CD4-positive, alpha-beta memory T cell (primary cell): ENCODE measurements at regions of chrX and their contacts with region 1.

Region 1: DNA sequence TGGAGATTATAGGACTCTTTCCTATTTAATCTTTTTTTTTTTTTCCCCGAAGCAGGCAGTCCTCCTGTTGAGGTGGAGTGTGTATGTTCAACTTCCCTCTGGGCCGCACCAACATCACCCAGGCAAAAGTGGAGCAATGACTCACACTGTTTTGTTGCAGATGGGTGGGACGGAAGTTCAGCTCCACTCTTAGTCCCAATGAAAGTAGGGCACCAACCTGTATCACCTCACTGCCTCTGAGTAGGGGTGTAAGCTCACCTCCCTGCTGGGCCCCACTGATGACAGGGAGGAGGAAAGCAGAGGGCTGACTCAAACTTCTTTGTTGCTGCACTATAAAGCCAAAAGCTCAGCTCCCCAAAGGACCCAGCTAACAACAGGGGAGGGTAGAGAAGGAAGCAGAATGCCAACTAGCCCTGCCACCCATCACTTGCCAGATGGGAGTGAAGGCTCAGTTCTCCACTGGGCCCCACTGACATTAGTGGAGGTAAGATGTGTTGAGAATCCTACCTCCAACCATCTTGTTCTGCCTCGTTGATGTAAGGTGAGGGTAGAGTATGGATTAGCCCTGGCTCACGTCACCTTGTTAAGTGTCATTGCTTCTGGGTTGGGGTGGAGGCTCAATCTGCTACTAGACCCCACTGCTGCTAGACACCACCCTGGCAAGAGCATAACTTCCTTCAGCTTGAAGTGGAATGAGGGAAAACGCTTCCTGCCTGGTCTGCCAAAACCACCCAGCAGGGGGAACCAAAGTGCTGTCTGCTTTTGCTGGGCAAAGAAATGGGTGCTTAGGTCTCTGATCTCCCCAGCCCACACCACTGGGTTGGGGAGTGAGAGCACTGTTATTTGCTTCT is 14.1 kb downstream of the RPS6KA3 start:
- DNase-seq: peak; percentile 72 to 82 (median 75)
- H3K4me3 ChIP-seq: no peak overlapping the region
- H3K4me3 Mint-ChIP-seq: peak overlapping the region in 7 of 8 donors; percentile 32 to 66 (median 48)
- H3K27ac ChIP-seq: peak overlapping the region; percentile 48
- H3K27ac Mint-ChIP-seq: peak overlapping the region; percentile 88 to 94 (median 92)
- H3K4me1 ChIP-seq: peaks cover 70% of the 10 kb centered on the region
- H3K4me1 Mint-ChIP-seq: peaks cover 36 to 67% (median 50%) of the 10 kb centered on the region in 4 donors
- H3K27me3 ChIP-seq: no peaks in the 10 kb centered on the region
- H3K27me3 Mint-ChIP-seq: no peaks in the 10 kb centered on the region

Region 2: DNA sequence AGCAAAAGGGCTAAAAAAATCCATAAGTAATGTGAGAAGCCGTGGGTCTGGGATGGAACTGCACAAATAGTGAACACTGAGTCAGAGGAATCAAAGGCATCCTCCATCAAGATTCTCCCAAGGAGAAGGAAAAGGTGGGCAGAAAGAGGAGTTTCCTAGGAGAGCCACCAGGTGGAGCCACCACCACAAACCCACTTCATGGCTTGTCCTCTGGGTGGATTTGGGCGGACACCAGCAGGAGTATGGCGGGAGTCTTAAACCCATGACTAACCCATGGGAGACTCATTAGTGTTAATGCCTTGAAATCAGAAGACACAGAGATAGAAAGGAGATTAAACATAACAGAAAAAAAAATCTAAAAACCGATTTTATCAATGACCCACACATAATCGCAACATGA is 512.9 kb before region 1 on chrX:
- CTCF ChIA-PET with region 1: no interaction called
- POLR2A ChIA-PET with region 1: no interaction called
- intact Hi-C with region 1: no loop called
- DNase-seq: peak; percentile 39 to 47 (median 42)
- H3K4me3 ChIP-seq: no peak overlapping the region
- H3K4me3 Mint-ChIP-seq: peak overlapping the region in 4 of 8 donors; percentile 39 to 85 (median 62)
- H3K27ac ChIP-seq: peak overlapping the region; percentile 21
- H3K27ac Mint-ChIP-seq: peak overlapping the region; percentile 71 to 98 (median 86)
- H3K4me1 ChIP-seq: peaks cover 90% of the 10 kb centered on the region
- H3K4me1 Mint-ChIP-seq: peaks cover 47 to 84% (median 68%) of the 10 kb centered on the region in 4 donors
- H3K27me3 ChIP-seq: no peaks in the 10 kb centered on the region
- H3K27me3 Mint-ChIP-seq: no peaks in the 10 kb centered on the region

Region 3: GRCh38 chrX:20159797-20160385 is 92.7 kb before region 1 on chrX:
- CTCF ChIA-PET with region 1: no interaction called
- POLR2A ChIA-PET with region 1: no interaction called
- intact Hi-C with region 1: no loop called
- DNase-seq: no peak
- H3K4me3 ChIP-seq: no peak overlapping the region
- H3K4me3 Mint-ChIP-seq: no peak overlapping the region
- H3K27ac ChIP-seq: no peak overlapping the region
- H3K27ac Mint-ChIP-seq: peak overlapping the region in 1 of 7 donors; percentile 48
- H3K4me1 ChIP-seq: no peaks in the 10 kb centered on the region
- H3K4me1 Mint-ChIP-seq: peaks cover 0 to 2% (median under 1%) of the 10 kb centered on the region in 4 donors
- H3K27me3 ChIP-seq: no peaks in the 10 kb centered on the region
- H3K27me3 Mint-ChIP-seq: no peaks in the 10 kb centered on the region

Region 4: GRCh38 chrX:20217275-20217674 is 35.3 kb before region 1 on chrX:
- CTCF ChIA-PET with region 1: interaction called, 3 read pairs
- POLR2A ChIA-PET with region 1: no interaction called
- intact Hi-C with region 1: loop called (anchors 5 kb)
- DNase-seq: peak in 2 of 5 donors; percentile 12 to 19
- H3K4me3 ChIP-seq: no peak overlapping the region
- H3K4me3 Mint-ChIP-seq: peak overlapping the region in 5 of 8 donors; percentile 1 to 48 (median 16)
- H3K27ac ChIP-seq: no peak overlapping the region
- H3K27ac Mint-ChIP-seq: peak overlapping the region in 1 of 7 donors; percentile 47
- H3K4me1 ChIP-seq: peaks cover 76% of the 10 kb centered on the region
- H3K4me1 Mint-ChIP-seq: peaks cover 33 to 71% (median 46%) of the 10 kb centered on the region in 4 donors
- H3K27me3 ChIP-seq: no peaks in the 10 kb centered on the region
- H3K27me3 Mint-ChIP-seq: no peaks in the 10 kb centered on the region

Region 5: DNA sequence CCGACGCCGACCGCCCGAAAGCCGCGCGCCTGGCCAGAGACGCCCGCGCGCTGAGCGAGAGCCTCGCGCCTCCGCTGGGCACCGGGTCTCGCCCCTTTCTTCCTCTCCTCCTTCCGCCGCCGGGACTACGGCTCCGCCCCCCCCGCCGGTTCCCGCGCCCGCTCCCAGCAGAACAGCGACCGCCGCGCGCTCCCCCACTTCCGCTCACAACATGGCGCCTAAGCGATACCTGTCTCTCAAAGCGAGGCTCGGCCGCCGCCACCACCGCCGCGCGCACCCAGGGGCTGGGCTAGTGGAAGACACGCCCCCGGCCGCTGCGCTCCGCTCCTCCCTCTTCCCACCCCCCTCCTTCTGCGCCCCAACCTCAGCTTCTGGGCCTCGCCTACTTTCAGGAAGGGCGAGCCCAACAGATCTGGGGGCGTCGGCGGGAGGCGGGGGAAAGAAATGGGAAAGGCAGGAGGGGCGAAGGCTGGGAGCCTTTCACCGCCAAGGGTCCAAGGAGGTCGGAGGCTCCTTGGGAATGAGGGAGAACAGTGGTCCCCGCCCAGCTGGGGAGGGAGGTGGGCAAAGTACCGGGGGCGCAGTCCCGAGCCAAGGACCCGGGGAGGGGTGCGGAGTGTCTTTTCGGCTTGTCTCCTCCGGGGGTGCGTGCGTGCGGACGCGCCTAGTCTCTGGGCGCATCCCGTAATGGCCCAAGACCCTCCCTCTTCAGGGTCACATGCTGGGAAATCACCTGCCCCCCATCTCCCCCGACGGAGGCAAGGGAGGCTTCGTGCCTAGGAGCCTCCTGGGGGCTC is 14.4 kb after region 1 on chrX and contains the start of gene RPS6KA3:
- CTCF ChIA-PET with region 1: interaction called, 8 read pairs
- POLR2A ChIA-PET with region 1: interaction called, 28 read pairs
- intact Hi-C with region 1: loop called (anchors 1 kb)
- DNase-seq: peak; percentile 87 to 92 (median 89)
- H3K4me3 ChIP-seq: peak within 1 kb of the TSS; percentile 69 to 86
- H3K4me3 Mint-ChIP-seq: peak within 1 kb of the TSS; percentile 88 to 98 (median 97)
- H3K27ac ChIP-seq: peak within 1 kb of the TSS; percentile 87
- H3K27ac Mint-ChIP-seq: peak within 1 kb of the TSS; percentile 94 to 97 (median 97)
- H3K4me1 ChIP-seq: peaks cover 21% of the 10 kb centered on the region
- H3K4me1 Mint-ChIP-seq: peaks cover 7 to 17% (median 11%) of the 10 kb centered on the region in 4 donors
- H3K27me3 ChIP-seq: no peaks in the 10 kb centered on the region
- H3K27me3 Mint-ChIP-seq: no peaks in the 10 kb centered on the region
- total RNA-seq, gene RPS6KA3: 130 to 139 TPM

Region 6: DNA sequence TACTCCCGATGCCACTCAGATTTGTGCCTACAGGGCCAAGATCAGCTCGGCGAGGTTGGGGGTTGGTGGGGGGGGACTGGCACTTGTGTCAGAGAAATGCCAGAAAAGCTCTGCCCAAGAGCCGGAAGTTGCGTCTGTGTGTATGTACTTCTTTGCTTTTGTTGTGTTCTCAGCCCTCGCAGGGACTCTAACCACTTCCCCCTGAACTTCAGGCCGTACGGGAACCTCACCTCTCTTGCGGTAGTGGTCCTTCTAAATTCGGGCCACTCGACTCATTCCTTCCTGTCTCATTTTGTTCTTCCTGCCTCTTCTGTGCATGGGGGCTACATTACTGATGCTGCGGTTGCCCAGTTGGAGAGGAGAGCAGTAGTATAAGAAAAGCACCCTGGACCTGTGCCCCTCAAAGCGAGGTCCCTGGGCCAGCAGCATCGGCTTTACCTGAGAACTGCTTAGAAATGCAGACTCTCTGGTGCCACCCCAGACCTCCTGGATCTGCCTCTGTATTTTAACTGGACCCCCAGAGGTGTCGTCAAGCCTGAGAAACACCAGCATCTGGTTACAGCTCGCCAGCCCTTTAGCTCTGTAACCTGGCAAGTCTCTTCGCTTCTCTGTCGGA is 160.4 kb after region 1 on chrX:
- CTCF ChIA-PET with region 1: interaction called, 4 read pairs
- POLR2A ChIA-PET with region 1: interaction called, 11 read pairs
- intact Hi-C with region 1: no loop called
- DNase-seq: peak; percentile 68 to 77 (median 72)
- H3K4me3 ChIP-seq: peak overlapping the region in 1 of 2 donors; percentile 24
- H3K4me3 Mint-ChIP-seq: peak overlapping the region; percentile 64 to 86 (median 74)
- H3K27ac ChIP-seq: peak overlapping the region; percentile 51
- H3K27ac Mint-ChIP-seq: peak overlapping the region; percentile 84 to 96 (median 93)
- H3K4me1 ChIP-seq: peaks cover 36% of the 10 kb centered on the region
- H3K4me1 Mint-ChIP-seq: peaks cover 20 to 44% (median 28%) of the 10 kb centered on the region in 4 donors
- H3K27me3 ChIP-seq: no peaks in the 10 kb centered on the region
- H3K27me3 Mint-ChIP-seq: no peaks in the 10 kb centered on the region

Region 7: GRCh38 chrX:20442597-20442996 is 190.0 kb after region 1 on chrX:
- CTCF ChIA-PET with region 1: interaction called, 52 read pairs
- POLR2A ChIA-PET with region 1: interaction called, 41 read pairs
- intact Hi-C with region 1: loop called (anchors 1 kb)
- DNase-seq: peak; percentile 78 to 81 (median 79)
- H3K4me3 ChIP-seq: no peak overlapping the region
- H3K4me3 Mint-ChIP-seq: peak overlapping the region in 3 of 8 donors; percentile 24 to 62 (median 25)
- H3K27ac ChIP-seq: no peak overlapping the region
- H3K27ac Mint-ChIP-seq: peak overlapping the region in 6 of 7 donors; percentile 15 to 78 (median 56)
- H3K4me1 ChIP-seq: peaks cover 71% of the 10 kb centered on the region
- H3K4me1 Mint-ChIP-seq: peaks cover 31 to 65% (median 50%) of the 10 kb centered on the region in 4 donors
- H3K27me3 ChIP-seq: no peaks in the 10 kb centered on the region
- H3K27me3 Mint-ChIP-seq: peaks cover 0 to 1% of the 10 kb centered on the region in 2 donors

Region 8: GRCh38 chrX:20452487-20452886 is 199.9 kb after region 1 on chrX:
- CTCF ChIA-PET with region 1: interaction called, 4 read pairs
- POLR2A ChIA-PET with region 1: interaction called, 11 read pairs
- intact Hi-C with region 1: no loop called
- DNase-seq: no peak
- H3K4me3 ChIP-seq: no peak overlapping the region
- H3K4me3 Mint-ChIP-seq: peak overlapping the region in 7 of 8 donors; percentile 40 to 73 (median 60)
- H3K27ac ChIP-seq: no peak overlapping the region
- H3K27ac Mint-ChIP-seq: peak overlapping the region; percentile 62 to 95 (median 81)
- H3K4me1 ChIP-seq: peaks cover 29% of the 10 kb centered on the region
- H3K4me1 Mint-ChIP-seq: peaks cover 18 to 43% (median 28%) of the 10 kb centered on the region in 4 donors
- H3K27me3 ChIP-seq: no peaks in the 10 kb centered on the region
- H3K27me3 Mint-ChIP-seq: no peaks in the 10 kb centered on the region

Region 9: GRCh38 chrX:21132686-21133393 is 880.2 kb after region 1 on chrX:
- CTCF ChIA-PET with region 1: no interaction called
- POLR2A ChIA-PET with region 1: no interaction called
- intact Hi-C with region 1: no loop called
- DNase-seq: no peak
- H3K4me3 ChIP-seq: no peak overlapping the region
- H3K4me3 Mint-ChIP-seq: no peak overlapping the region
- H3K27ac ChIP-seq: no peak overlapping the region
- H3K27ac Mint-ChIP-seq: no peak overlapping the region
- H3K4me1 ChIP-seq: no peaks in the 10 kb centered on the region
- H3K4me1 Mint-ChIP-seq: no peaks in the 10 kb centered on the region
- H3K27me3 ChIP-seq: no peaks in the 10 kb centered on the region
- H3K27me3 Mint-ChIP-seq: no peaks in the 10 kb centered on the region